ENCODE measurements at regions of chr16 and their contacts with region 1.

Region 1: GRCh38 chr16:74984535-74985296 is at the start of gene WDR59:
- DNase-seq: peak; percentile 100
- ATAC-seq: peak; percentile 100
- H3K4me3 Mint-ChIP-seq: peak within 1 kb of the TSS; percentile 85
- H3K27ac Mint-ChIP-seq: peak within 1 kb of the TSS; percentile 85
- H3K4me1 Mint-ChIP-seq: peaks cover 17% of the 10 kb centered on the region
- H3K27me3 Mint-ChIP-seq: no peaks in the 10 kb centered on the region
- total RNA-seq, gene WDR59: 69.2 to 91.4 TPM

Region 2: DNA sequence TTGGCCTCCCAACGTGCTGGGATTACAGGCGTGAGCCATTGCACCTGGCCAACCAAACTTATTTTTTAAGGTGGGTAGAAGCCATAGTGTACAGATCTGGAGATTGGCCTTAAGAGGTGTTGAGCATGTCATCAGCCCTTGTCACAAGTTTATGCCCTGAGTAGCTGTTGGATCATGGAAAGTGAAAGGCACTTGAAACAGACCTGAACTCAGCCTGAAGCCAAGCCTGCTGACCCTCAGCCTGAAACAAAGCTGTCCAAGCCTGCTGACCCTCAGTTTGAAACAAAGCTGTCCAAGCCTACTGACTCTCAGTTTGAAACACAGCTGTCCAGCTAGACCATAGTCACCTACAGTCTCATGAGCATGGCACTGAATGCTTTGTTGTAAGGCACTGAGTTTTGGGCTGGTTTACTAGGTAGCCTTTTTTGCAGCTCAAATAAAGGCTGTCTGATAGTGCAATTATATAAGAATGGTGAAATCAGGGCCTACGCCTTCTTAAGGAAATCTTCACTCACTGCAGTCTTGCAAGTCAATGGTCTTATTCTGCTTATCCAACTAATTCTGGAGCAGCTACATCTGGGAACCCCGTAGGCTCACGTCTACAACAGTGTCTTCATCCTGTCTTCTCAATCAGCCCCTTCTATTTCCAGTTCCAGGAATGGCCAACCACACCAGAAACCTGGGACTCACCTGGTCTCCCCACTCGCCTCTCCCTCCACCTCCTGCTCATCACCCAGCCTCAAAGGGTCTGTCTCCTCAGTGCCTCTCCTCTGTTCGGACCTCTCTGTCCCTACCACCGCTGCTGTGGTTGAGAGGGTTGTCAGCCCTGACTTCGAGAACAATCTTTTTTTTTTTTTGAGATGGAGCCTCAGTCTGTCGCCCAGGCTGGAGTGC is 611.5 kb before region 1 on chr16:
- CTCF ChIA-PET with region 1: no interaction called
- POLR2A ChIA-PET with region 1: no interaction called
- intact Hi-C with region 1: loop called in 1 of 2 experiments (anchors 5 kb)
- DNase-seq: no peak
- ATAC-seq: no peak
- H3K4me3 Mint-ChIP-seq: no peak overlapping the region
- H3K27ac Mint-ChIP-seq: no peak overlapping the region
- H3K4me1 Mint-ChIP-seq: no peaks in the 10 kb centered on the region
- H3K27me3 Mint-ChIP-seq: no peaks in the 10 kb centered on the region

Region 3: DNA sequence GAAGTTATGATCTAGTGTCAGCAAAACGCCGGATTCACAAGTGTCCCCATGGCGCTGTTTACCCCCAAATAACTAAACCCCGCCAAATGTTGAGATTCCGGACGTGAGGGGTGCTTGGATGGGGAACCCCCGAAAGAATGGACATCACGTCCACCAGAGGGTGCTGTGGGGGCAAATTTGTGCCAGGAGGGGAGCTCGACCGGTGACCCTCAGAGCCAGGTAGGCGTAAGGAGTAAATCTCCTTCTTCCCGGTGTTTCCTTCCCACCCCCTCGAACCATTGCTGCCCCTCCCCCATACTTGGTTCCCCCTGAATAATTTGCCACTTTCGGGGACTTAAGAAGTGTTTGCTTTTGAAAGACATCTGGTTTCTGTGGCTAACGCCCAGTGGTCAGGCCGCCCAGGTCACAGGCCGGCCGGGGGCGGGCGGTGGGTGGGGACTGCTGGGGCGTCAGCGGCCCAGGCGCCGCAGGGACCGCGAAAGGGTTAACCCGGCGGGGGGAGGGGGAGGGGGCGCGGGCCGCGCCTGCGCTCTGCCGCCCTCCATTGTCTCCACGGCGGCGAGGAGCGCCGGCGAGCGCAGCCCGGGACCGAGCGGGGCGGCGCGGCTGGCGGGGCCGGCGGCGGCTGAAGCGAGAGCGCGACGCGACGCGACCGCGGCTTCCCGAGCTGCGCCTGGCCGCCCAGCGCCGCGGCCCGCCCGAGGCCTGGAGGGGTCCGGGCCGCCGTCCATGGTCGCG is 13.9 kb after region 1 on chr16 and contains the start of gene ZNRF1:
- CTCF ChIA-PET with region 1: interaction called, 22 read pairs
- POLR2A ChIA-PET with region 1: interaction called, 5 read pairs
- intact Hi-C with region 1: loop called (anchors 1 kb)
- DNase-seq: peak; percentile 91
- ATAC-seq: peak; percentile 80
- H3K4me3 Mint-ChIP-seq: peak within 1 kb of the TSS; percentile 87
- H3K27ac Mint-ChIP-seq: peak within 1 kb of the TSS; percentile 75
- H3K4me1 Mint-ChIP-seq: peaks cover 39% of the 10 kb centered on the region
- H3K27me3 Mint-ChIP-seq: peaks cover 4% of the 10 kb centered on the region
- total RNA-seq, gene ZNRF1: 35.2 to 42.9 TPM

Region 4: DNA sequence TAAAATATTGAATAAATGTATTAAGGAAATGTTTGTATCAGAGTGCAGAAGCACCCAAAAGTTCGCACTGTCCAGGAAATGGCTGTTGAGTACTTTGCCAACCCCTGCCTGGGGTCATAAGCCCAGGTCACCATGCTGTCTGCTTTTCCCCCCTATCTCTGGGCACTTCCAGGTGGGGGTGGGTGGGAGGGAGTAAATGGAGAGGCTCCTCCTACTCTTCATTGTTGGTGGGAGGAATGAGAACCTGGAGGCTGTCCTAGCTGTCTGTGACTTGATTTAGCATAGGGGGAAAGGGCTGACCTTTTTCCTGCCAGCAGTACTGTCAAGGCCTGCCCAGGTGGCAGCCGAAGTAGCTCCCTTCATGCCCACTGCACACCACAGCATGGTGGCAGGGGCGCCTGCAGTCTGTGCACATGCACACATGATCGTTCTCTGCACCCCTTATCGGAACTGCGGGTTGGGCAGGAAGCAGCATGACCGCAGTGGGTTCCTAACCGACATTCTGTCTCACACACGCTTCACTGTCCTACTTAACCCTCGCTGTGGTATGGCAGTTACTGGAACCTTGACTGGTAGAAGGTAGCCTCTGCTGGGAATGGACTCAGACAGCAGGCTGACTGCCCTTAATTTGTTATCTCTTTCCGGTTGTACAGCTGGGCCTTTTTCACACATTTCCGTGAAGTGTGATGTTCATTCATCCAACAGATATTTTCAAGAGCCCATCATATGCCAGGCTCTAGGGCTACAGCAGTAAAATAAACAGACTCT is 90.4 kb after region 1 on chr16:
- CTCF ChIA-PET with region 1: no interaction called
- POLR2A ChIA-PET with region 1: interaction called, 3 read pairs
- intact Hi-C with region 1: loop called in 1 of 2 experiments (anchors 1 kb)
- DNase-seq: peak; percentile 89
- ATAC-seq: peak; percentile 92
- H3K4me3 Mint-ChIP-seq: peak overlapping the region; percentile 54
- H3K27ac Mint-ChIP-seq: peak overlapping the region; percentile 97
- H3K4me1 Mint-ChIP-seq: peaks cover 62% of the 10 kb centered on the region
- H3K27me3 Mint-ChIP-seq: no peaks in the 10 kb centered on the region

Region 5: GRCh38 chr16:75311383-75311938 is 326.7 kb after region 1 on chr16:
- CTCF ChIA-PET with region 1: no interaction called
- POLR2A ChIA-PET with region 1: no interaction called
- intact Hi-C with region 1: no loop called
- DNase-seq: no peak
- ATAC-seq: no peak
- H3K4me3 Mint-ChIP-seq: no peak overlapping the region
- H3K27ac Mint-ChIP-seq: no peak overlapping the region
- H3K4me1 Mint-ChIP-seq: peaks cover 5% of the 10 kb centered on the region
- H3K27me3 Mint-ChIP-seq: no peaks in the 10 kb centered on the region

Region 6: GRCh38 chr16:75432828-75433731 is 448.4 kb after region 1 on chr16 and contains the start of gene CFDP1:
- CTCF ChIA-PET with region 1: no interaction called
- POLR2A ChIA-PET with region 1: no interaction called
- intact Hi-C with region 1: loop called (anchors 1 kb)
- DNase-seq: peak; percentile 97
- ATAC-seq: peak; percentile 94
- H3K4me3 Mint-ChIP-seq: peak within 1 kb of the TSS; percentile 92
- H3K27ac Mint-ChIP-seq: peak within 1 kb of the TSS; percentile 95
- H3K4me1 Mint-ChIP-seq: peaks cover 39% of the 10 kb centered on the region
- H3K27me3 Mint-ChIP-seq: no peaks in the 10 kb centered on the region
- total RNA-seq, gene CFDP1: 44.0 to 48.2 TPM

Measured in activated CD4-positive, alpha-beta T cell treated with anti-CD3 and anti-CD28 coated beads for 36 hours (primary cell).